CD8-positive, alpha-beta T cell (primary cell): ENCODE measurements at regions of chr5 and their contacts with region 1.

Region 1: DNA sequence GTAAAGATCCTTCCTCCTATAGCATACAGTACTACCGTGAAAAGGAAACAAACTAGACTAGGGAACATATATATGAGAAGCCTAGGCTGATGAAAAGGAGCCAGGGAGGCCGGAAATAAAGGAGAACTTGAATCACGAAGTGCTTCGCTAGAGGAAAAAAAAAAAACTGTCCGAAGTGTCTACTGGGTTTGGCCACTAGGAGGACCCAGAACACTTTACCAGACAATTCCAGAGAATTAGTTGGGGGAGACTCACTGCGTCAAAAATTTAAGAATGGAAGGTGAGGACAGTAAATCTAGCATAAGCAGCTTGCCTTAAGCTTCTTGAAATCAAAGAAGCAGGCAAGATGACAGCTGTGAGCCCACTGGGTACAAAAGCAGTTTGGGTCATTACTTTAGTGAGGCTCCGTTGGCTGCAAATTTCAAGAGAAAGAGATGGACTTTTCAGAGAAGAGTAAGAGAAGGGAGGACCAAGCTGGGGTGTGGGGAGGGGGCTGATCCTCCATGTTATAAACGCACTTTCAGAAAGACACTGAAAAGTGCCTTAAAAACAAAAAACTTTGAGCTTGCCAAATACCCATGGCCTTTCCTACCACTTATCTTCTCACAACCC is 47.4 kb downstream of the P4HA2 start:
- DNase-seq: peak in 2 of 9 experiments; percentile 18 to 39
- ATAC-seq: no peak
- H3K4me3 ChIP-seq: no peak overlapping the region
- H3K4me3 Mint-ChIP-seq: no peak overlapping the region
- H3K27ac ChIP-seq: no peak overlapping the region
- H3K27ac Mint-ChIP-seq: no peak overlapping the region
- H3K4me1 ChIP-seq: no peaks in the 10 kb centered on the region
- H3K4me1 Mint-ChIP-seq: peaks cover 14% of the 10 kb centered on the region
- H3K27me3 ChIP-seq: no peaks in the 10 kb centered on the region
- H3K27me3 Mint-ChIP-seq: no peaks in the 10 kb centered on the region
- CTCF ChIP-seq: peak; percentile 30

Region 2: DNA sequence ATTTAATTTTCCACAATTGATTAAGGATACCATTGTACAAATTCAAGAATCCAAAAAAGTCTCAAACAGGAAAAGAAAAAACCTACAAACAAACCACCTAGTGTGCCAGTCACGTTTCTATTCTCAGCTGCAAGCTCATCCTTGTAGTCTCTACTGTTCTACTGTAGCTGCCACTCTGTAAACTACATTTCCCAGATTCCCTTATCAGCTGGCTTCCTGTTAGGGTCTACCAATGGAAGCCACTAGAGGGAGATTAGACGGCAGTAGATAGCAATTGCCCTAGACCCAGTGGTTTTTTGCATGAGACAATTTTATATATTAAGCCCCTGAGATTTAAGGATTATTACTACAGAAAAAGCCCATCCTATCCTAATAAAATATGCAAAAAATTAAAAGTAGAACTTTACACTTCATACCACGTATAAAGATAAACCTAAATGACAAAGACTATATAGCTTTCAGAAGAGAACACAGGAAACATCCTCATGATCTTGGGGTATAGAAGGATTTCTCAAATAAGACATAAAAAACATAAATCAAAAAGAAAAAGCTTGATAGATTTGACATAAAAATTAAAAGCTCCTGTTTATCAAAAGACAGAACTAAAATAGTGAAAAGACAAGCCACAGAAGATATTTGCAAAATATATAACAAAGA is 10.0 kb after region 1 on chr5:
- CTCF ChIA-PET with region 1: interaction called, 15 read pairs
- POLR2A ChIA-PET with region 1: no interaction called
- intact Hi-C with region 1: no loop called
- DNase-seq: peak in 2 of 9 experiments; percentile 61 to 73
- ATAC-seq: peak; percentile 100
- H3K4me3 ChIP-seq: no peak overlapping the region
- H3K4me3 Mint-ChIP-seq: no peak overlapping the region
- H3K27ac ChIP-seq: no peak overlapping the region
- H3K27ac Mint-ChIP-seq: no peak overlapping the region
- H3K4me1 ChIP-seq: no peaks in the 10 kb centered on the region
- H3K4me1 Mint-ChIP-seq: peaks cover 3% of the 10 kb centered on the region
- H3K27me3 ChIP-seq: no peaks in the 10 kb centered on the region
- H3K27me3 Mint-ChIP-seq: peaks cover 3% of the 10 kb centered on the region
- CTCF ChIP-seq: peak; percentile 52